ENCODE measurements at regions of chr9 and their contacts with region 1.

Region 1: DNA sequence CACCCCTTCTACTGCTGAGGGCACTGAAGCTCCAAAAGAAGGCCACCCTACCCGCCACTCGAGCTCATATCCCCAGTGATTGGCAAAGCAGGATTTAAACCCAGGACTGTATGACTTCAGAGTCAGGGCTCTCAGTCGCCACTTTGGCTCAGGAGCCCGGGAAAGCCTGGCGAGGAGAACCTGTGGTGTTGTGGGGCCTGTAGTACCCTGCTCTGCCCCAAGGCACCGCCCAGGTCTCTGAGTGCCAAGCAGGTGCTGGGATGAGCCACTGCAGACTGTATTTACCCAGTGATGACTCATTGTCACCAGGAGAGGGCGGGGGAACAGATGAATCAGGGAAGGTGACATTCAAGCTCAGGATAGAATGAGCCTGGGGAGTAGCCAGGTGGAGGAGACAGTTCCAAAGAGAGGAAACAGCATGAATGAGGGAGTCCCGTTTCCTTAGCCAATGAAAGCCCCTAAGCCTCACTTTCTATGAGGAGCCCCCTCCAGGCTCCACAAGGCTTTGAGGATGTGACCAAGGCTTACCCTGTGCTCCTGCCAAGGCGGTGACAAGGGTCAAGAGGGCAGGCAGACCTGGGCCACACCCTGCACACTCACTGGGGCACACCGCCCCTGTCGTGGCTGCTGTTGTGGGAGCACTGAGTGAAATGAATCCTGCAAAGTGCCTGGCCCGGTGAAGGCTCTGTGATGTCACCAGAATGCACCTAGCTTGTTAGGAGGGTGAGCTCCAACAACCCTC is 17.8 kb upstream of the DPM2 start:
- DNase-seq: peak; percentile 72 to 94 (median 73)
- H3K4me3 ChIP-seq: peak overlapping the region in 1 of 2 donors; percentile 2
- H3K4me3 Mint-ChIP-seq: peak overlapping the region; percentile 43 to 80 (median 80)
- H3K27ac ChIP-seq: peak overlapping the region; percentile 57
- H3K27ac Mint-ChIP-seq: peak overlapping the region; percentile 86 to 97 (median 93)
- H3K4me1 ChIP-seq: peaks cover 97% of the 10 kb centered on the region
- H3K4me1 Mint-ChIP-seq: peaks cover 48 to 92% (median 76%) of the 10 kb centered on the region in 4 donors
- H3K27me3 ChIP-seq: no peaks in the 10 kb centered on the region
- H3K27me3 Mint-ChIP-seq: no peaks in the 10 kb centered on the region

Region 2: DNA sequence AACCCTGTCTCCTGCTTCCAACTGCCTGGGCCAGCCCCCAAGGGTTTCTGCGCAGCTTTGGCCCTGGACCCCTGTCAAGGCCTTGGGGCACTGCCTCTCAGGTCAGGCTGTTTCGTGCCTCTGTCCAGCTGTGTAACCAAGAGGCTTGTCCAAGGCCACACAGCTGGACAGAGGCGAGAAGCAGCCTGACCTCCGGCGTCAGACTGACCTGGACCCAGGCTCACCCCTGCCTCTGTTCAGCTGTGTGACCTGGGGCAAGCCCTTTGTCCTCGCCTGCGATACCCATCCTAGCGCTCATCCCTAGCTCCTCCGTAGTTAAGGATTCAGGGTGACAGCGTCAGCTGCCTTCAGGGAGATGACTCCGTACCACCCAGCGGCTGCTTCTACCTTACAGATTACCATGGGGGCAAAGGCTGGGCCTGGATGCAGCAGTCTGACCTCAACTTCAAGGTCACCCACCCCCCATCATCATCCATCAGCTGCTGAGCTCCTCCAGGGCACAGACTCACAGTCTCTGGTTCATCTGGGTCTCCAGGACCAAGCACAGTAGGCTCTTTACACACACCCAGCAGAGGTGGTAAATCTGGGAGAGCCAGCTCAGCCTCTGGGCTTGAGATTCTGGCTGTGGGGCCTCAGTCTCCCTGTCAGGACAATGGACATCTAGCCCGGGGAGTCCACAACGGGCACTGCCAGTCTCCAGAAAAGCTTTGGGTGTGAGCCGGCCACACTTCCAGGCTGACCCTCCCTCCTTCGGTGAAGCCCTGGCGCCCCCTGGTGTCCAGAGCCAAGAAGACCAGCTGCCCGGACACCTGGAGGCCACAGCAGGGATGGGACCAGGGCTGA is 85.9 kb before region 1 on chr9:
- CTCF ChIA-PET with region 1: no interaction called
- POLR2A ChIA-PET with region 1: no interaction called
- intact Hi-C with region 1: no loop called
- DNase-seq: peak; percentile 61 to 76 (median 63)
- H3K4me3 ChIP-seq: no peak overlapping the region
- H3K4me3 Mint-ChIP-seq: no peak overlapping the region
- H3K27ac ChIP-seq: no peak overlapping the region
- H3K27ac Mint-ChIP-seq: peak overlapping the region in 2 of 7 donors; percentile 31 to 53
- H3K4me1 ChIP-seq: peaks cover 20% of the 10 kb centered on the region
- H3K4me1 Mint-ChIP-seq: peaks cover 13 to 20% (median 15%) of the 10 kb centered on the region in 4 donors
- H3K27me3 ChIP-seq: no peaks in the 10 kb centered on the region
- H3K27me3 Mint-ChIP-seq: no peaks in the 10 kb centered on the region

Region 3: GRCh38 chr9:127937388-127938280 is 17.8 kb before region 1 on chr9 and contains the start of gene DPM2:
- CTCF ChIA-PET with region 1: interaction called, 109 read pairs
- POLR2A ChIA-PET with region 1: interaction called, 39 read pairs
- intact Hi-C with region 1: no loop called
- DNase-seq: peak; percentile 85 to 89 (median 87)
- H3K4me3 ChIP-seq: peak within 1 kb of the TSS; percentile 37 to 73
- H3K4me3 Mint-ChIP-seq: peak within 1 kb of the TSS; percentile 88 to 98 (median 91)
- H3K27ac ChIP-seq: peak within 1 kb of the TSS; percentile 75
- H3K27ac Mint-ChIP-seq: peak within 1 kb of the TSS; percentile 89 to 97 (median 97)
- H3K4me1 ChIP-seq: peaks cover 37% of the 10 kb centered on the region
- H3K4me1 Mint-ChIP-seq: peaks cover 23 to 53% (median 41%) of the 10 kb centered on the region in 4 donors
- H3K27me3 ChIP-seq: no peaks in the 10 kb centered on the region
- H3K27me3 Mint-ChIP-seq: no peaks in the 10 kb centered on the region
- total RNA-seq, gene DPM2: 37.0 to 39.7 TPM

Region 4: GRCh38 chr9:127970401-127971313 is 15.2 kb after region 1 on chr9:
- CTCF ChIA-PET with region 1: interaction called, 55 read pairs
- POLR2A ChIA-PET with region 1: interaction called, 482 read pairs
- intact Hi-C with region 1: loop called (anchors 1 kb)
- DNase-seq: peak; percentile 72 to 89 (median 73)
- H3K4me3 ChIP-seq: peak overlapping the region; percentile 61 to 76
- H3K4me3 Mint-ChIP-seq: peak overlapping the region; percentile 78 to 98 (median 93)
- H3K27ac ChIP-seq: peak overlapping the region; percentile 78
- H3K27ac Mint-ChIP-seq: peak overlapping the region; percentile 81 to 99 (median 97)
- H3K4me1 ChIP-seq: peaks cover 100% of the 10 kb centered on the region
- H3K4me1 Mint-ChIP-seq: peaks cover 73 to 100% (median 87%) of the 10 kb centered on the region in 4 donors
- H3K27me3 ChIP-seq: no peaks in the 10 kb centered on the region
- H3K27me3 Mint-ChIP-seq: no peaks in the 10 kb centered on the region

Region 5: GRCh38 chr9:128001779-128002298 is 46.4 kb after region 1 on chr9:
- CTCF ChIA-PET with region 1: interaction called, 15 read pairs
- POLR2A ChIA-PET with region 1: interaction called, 23 read pairs
- intact Hi-C with region 1: no loop called
- DNase-seq: no peak
- H3K4me3 ChIP-seq: no peak overlapping the region
- H3K4me3 Mint-ChIP-seq: no peak overlapping the region
- H3K27ac ChIP-seq: no peak overlapping the region
- H3K27ac Mint-ChIP-seq: peak overlapping the region in 3 of 7 donors; percentile 19 to 68 (median 65)
- H3K4me1 ChIP-seq: peaks cover 37% of the 10 kb centered on the region
- H3K4me1 Mint-ChIP-seq: peaks cover 13 to 50% (median 32%) of the 10 kb centered on the region in 4 donors
- H3K27me3 ChIP-seq: no peaks in the 10 kb centered on the region
- H3K27me3 Mint-ChIP-seq: no peaks in the 10 kb centered on the region

Region 6: DNA sequence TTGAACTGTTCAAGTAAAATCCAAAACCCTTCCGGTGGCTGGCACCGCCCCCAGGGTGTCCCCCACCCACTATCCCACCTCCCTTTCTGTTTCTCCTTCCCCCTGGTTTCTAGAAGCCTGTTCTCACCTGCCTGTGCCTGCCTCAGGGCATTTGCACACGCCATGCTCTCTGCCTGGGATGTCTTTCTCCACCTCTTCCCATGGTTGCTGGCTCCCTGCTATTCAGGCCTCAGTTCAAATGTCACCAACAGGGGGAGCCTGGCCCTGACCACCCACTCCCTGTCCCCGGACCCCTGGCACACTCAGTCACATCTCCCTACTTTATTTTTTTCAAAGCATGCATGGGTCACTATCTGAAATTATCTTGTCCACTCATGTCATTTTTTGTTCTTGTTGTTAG is 65.2 kb after region 1 on chr9:
- CTCF ChIA-PET with region 1: interaction called, 35 read pairs
- POLR2A ChIA-PET with region 1: interaction called, 1,317 read pairs
- intact Hi-C with region 1: no loop called
- DNase-seq: no peak
- H3K4me3 ChIP-seq: no peak overlapping the region
- H3K4me3 Mint-ChIP-seq: peak overlapping the region in 1 of 8 donors; percentile 77
- H3K27ac ChIP-seq: no peak overlapping the region
- H3K27ac Mint-ChIP-seq: peak overlapping the region; percentile 31 to 100 (median 94)
- H3K4me1 ChIP-seq: peaks cover 55% of the 10 kb centered on the region
- H3K4me1 Mint-ChIP-seq: peaks cover 44 to 71% (median 52%) of the 10 kb centered on the region in 4 donors
- H3K27me3 ChIP-seq: no peaks in the 10 kb centered on the region
- H3K27me3 Mint-ChIP-seq: no peaks in the 10 kb centered on the region

Region 7: DNA sequence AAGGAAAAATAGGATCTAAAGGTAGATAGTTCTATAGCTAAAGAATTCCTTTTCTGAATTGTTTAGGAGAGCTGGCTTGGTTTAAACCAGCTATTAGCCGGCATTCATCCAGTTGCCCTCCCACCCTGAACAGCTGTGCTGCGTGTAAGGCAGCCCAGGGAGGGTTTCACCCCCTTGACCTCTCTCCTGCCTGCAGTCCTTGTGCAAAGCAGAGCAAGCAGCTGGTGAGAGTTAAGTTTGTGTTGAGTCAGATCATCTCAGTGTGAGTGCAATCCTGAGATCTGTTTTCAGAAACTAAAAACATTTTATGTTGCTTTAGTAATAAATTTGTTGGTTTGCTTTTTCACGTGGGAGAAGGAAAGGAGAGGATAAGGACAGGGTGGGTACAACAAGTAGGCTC is 125.6 kb after region 1 on chr9:
- CTCF ChIA-PET with region 1: interaction called, 9 read pairs
- POLR2A ChIA-PET with region 1: interaction called, 3 read pairs
- intact Hi-C with region 1: loop called (anchors 5 kb)
- DNase-seq: no peak
- H3K4me3 ChIP-seq: no peak overlapping the region
- H3K4me3 Mint-ChIP-seq: peak overlapping the region in 1 of 8 donors; percentile 22
- H3K27ac ChIP-seq: no peak overlapping the region
- H3K27ac Mint-ChIP-seq: peak overlapping the region; percentile 3 to 83 (median 57)
- H3K4me1 ChIP-seq: peaks cover 52% of the 10 kb centered on the region
- H3K4me1 Mint-ChIP-seq: peaks cover 42 to 67% (median 54%) of the 10 kb centered on the region in 4 donors
- H3K27me3 ChIP-seq: no peaks in the 10 kb centered on the region
- H3K27me3 Mint-ChIP-seq: no peaks in the 10 kb centered on the region

Region 8: DNA sequence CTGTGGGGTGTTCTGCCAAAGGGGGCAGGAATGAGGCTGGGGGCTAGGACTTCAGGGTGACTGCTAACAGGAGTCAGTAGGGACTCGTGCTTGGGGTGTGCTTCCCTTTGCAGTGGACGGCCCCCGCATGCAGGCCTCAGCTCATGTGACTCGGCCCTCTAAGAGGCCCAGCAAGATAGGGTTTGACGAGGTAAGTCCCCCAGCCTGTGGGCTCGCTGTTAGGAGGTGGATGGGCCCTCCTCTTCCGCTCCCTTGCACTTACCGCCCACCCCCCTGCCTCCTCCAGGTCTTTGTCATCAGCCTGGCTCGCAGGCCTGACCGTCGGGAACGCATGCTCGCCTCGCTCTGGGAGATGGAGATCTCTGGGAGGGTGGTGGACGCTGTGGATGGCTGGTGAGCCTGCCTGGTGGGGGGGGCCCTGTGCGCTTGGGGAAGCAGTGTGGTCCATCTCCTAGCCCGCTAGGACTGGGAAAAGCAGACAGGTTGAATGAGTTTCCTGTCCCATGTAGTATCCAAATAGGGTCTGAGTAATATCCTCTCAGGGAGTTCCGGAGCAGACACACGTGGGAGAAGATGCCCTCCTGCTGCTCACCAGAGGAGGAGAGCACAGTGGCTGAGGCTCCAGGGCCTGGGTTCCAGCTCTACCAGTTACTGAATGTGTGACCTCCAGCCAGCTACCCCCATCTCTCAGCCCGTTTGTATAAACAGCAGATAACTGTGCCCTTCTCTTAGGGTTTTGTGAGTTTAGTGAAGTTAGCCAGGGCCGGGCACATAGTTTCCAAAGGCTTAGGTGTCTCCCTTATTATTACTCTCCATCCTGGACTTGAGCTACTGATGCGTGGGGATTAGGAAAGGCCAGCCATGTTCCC is 473.4 kb after region 1 on chr9:
- CTCF ChIA-PET with region 1: no interaction called
- POLR2A ChIA-PET with region 1: no interaction called
- intact Hi-C with region 1: no loop called
- DNase-seq: no peak
- H3K4me3 ChIP-seq: no peak overlapping the region
- H3K4me3 Mint-ChIP-seq: no peak overlapping the region
- H3K27ac ChIP-seq: no peak overlapping the region
- H3K27ac Mint-ChIP-seq: no peak overlapping the region
- H3K4me1 ChIP-seq: no peaks in the 10 kb centered on the region
- H3K4me1 Mint-ChIP-seq: no peaks in the 10 kb centered on the region
- H3K27me3 ChIP-seq: no peaks in the 10 kb centered on the region
- H3K27me3 Mint-ChIP-seq: no peaks in the 10 kb centered on the region